H1 (cell line): ENCODE measurements at regions of chr4 and their contacts with region 1.

Region 1: DNA sequence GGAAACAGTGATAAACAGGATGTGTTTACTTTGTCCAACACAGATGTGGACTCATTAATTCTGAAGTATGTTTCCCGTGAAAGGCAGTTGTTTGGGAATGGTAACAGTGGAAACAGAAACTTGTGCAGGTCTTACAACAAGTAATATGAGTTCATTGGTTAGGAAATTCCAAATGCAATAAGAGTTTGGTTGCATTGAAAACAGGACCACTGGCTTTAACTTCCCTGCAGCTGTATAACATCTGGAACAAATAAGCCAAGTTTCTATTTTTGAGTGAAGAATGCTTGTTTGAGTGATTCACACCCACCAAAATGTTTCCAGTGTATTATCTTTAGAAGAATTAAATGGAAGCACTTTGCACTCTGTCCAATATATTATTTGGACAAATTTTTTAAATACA is 82.4 kb upstream of the BMP3 start:
- DNase-seq: no peak
- H3K4me3 ChIP-seq: no peak overlapping the region
- H3K27ac ChIP-seq: no peak overlapping the region
- H3K4me1 ChIP-seq: no peaks in the 10 kb centered on the region
- H3K27me3 ChIP-seq: no peaks in the 10 kb centered on the region
- CTCF ChIP-seq: no peak
- EP300 ChIP-seq: no peak
- POLR2A ChIP-seq: no peak
- RAD21 ChIP-seq: no peak

Region 2: GRCh38 chr4:80989921-80990544 is 41.9 kb after region 1 on chr4:
- CTCF ChIA-PET with region 1: interaction called, 12 read pairs
- POLR2A ChIA-PET with region 1: no interaction called
- DNase-seq: peak; percentile 15 to 43
- H3K4me3 ChIP-seq: no peak overlapping the region
- H3K27ac ChIP-seq: no peak overlapping the region
- H3K4me1 ChIP-seq: peaks cover 0 to 3% (median under 1%) of the 10 kb centered on the region in 4 experiments; a peak in 1 of 7 replicates
- H3K27me3 ChIP-seq: no peaks in the 10 kb centered on the region
- CTCF ChIP-seq: peak in 2 of 3 experiments; percentile 48 to 72; a peak in 2 of 4 replicates
- EP300 ChIP-seq: no peak
- POLR2A ChIP-seq: no peak
- RAD21 ChIP-seq: peak; percentile 64 to 66